Right ventricle myocardium inferior (tissue), 1 donor: ENCODE measurements at regions of chr1 and their contacts with region 1.

Region 1: DNA sequence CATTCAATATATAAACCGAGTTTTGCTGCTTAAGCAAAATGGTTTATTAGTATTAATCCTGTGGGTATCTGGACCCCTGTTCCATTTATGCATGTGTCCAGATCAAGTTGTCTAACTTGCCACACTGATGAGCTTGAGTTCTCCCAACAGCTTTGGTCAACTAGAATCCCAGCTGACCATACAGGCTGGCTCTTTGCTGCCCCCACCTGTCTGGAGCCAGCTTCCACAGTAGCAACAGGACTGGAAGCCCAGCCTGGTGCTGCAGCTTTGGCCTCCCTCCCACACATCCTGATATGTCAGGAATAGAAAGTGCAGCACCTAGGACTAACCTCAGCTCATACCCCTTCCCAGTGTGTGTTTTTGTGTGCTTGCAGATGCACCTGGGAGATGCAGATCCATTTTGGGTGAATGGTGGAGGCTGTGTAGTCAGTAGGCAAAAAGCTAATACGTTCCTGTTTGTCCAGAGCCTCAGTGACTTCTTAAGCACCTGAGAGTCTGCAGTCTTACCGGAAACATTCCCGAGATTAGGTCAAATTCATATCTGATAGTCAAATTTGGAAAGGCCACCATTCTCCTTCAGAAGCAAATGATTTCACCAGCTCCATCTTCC is 40.9 kb upstream of the BEND5 start:
- DNase-seq: peak; percentile 64
- ATAC-seq: peak; percentile 54

Region 2: GRCh38 chr1:48572646-48573261 is 244.9 kb before region 1 on chr1:
- intact Hi-C with region 1: loop called (anchors 10 kb)
- DNase-seq: no peak
- ATAC-seq: peak; percentile 60

Region 3: DNA sequence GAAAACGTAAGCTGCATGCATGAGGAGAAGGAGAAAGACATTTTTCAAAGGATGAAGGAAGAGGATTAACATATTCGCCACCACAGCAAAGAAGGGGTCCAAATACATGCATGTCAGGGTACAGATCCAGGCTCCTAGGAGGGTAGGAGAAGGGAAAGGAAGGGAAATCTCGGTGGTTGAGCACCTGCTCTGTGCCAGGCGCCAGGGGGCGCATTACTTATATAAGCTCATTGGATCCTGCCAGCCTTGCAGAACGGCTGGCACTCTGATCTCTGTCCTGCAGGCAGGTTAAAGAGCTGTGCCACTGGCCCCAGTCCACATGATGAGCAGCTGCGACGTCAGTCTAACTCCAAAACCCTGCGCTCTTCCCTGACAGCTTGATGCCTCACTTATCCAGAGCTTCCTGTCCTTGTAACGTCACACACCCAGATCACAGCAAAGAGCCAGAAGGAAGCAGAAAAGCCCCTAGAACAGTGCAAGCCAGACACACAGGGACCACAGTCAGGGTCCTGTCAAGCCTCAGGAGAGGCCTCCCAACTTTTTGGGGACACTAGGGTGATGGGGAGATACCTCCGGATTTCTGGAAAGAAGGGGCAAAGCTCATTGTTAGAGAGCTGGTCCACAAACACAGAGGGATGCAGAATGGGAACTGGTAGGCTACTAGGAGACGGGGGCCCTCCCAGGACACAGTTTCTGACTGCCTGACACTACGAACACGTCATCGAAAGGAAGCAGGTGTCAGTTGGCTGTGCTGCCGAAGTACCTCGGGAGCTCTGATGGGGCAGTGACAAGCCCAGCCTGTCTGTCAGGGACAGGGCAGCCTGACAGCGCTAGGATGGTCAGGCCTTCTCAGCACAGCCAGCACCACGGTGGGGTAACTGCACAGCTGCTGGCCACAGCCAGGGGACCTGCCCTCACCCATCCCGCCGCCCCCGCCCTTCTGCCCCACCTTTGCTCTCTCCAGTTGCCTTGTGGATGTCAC is 140.0 kb before region 1 on chr1:
- intact Hi-C with region 1: loop called (anchors 5 kb)
- DNase-seq: peak; percentile 82
- ATAC-seq: peak; percentile 57

Region 4: GRCh38 chr1:48853006-48853405 is 35.4 kb after region 1 on chr1:
- intact Hi-C with region 1: no loop called
- DNase-seq: no peak
- ATAC-seq: no peak

Region 5: GRCh38 chr1:48889082-48889481 is 71.5 kb after region 1 on chr1:
- intact Hi-C with region 1: no loop called
- DNase-seq: no peak
- ATAC-seq: no peak

Region 6: DNA sequence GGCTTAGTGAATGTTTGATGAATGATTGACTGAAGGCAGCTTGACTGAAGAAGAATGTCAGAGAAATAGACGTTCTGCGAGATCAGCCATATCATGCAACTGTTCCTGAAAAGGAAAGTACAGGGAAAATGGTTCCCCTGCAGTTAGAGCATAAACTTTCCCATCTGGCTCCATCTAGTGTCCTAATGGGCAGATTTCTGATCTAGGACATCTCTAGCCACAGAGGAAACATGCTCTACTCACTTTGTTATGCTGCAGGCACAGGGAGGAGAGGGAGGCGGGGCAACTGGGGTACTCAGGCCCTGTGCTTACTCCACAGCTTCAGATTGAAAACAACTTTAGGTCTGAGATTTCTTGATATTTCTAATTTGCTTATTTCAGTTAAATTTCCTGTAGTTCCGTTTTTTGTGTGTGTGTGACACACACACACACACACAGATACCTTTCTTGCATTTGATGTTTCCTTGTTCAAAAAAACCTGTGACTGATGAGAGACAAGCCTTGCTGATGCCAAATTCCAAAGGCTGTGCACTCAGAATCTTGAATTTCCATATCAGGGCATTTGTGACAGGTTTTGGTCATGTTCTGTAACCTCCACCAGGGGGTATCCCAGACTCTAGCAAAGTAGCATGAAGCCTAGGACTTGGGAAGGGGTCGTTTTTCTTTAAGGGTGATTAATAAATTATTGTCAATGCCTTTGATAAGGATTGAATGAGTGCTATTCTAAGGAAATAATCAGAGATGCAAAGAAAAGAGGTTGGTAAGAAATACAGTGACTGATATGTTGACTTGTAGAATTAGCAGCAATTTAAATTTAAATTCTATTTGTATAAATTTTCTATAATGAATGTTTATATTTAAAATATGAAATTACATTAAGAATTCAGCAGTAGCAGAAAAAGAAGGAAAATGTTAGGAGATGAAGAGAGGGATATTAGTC is 98.8 kb after region 1 on chr1:
- intact Hi-C with region 1: no loop called
- DNase-seq: no peak
- ATAC-seq: no peak